K562 (cell line): ENCODE measurements at regions of chr18 and their contacts with region 1.

Region 1: DNA sequence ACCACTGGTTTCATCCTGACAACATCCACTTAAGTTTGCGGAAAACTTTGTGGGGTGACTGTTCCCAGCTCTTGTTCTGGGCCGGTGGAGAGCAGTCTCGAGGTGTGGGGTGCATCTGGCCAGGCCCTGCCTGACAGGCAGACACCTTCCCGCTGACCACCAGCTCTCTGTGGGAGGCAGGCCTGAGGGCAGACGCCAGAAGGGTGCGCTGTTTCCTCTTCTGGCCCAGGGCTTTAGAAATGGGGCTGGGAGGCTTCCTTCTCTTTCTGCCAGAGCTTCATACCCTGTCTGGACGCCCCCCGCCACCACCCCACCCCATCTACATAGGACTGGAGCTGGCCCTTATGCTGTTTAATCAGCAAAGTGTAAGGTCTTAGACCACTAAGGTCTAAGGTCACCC is 263.8 kb downstream of the LOXHD1 start:
- DNase-seq: peak; percentile 37 to 48 (median 40)
- ATAC-seq: peak; percentile 93
- H3K4me3 ChIP-seq: no peak overlapping the region
- H3K27ac ChIP-seq: no peak overlapping the region
- H3K4me1 ChIP-seq: no peaks in the 10 kb centered on the region; a peak in 4 of 5 replicates
- H3K27me3 ChIP-seq: peaks cover 0 to 16% of the 10 kb centered on the region in 2 experiments; a peak in 2 of 5 replicates
- CTCF ChIP-seq: peak; percentile 62 to 73 (median 69)
- EP300 ChIP-seq: no peak
- POLR2A ChIP-seq: no peak
- RAD21 ChIP-seq: peak; percentile 61 to 78

Region 2: GRCh38 chr18:46481048-46481846 is 88.0 kb after region 1 on chr18:
- CTCF ChIA-PET with region 1: no interaction called
- POLR2A ChIA-PET with region 1: no interaction called
- in situ Hi-C with region 1: no loop called
- intact Hi-C with region 1: loop called (anchors 5 kb)
- DNase-seq: peak; percentile 30 to 56 (median 38)
- ATAC-seq: peak; percentile 85
- H3K4me3 ChIP-seq: no peak overlapping the region
- H3K27ac ChIP-seq: no peak overlapping the region
- H3K4me1 ChIP-seq: no peaks in the 10 kb centered on the region
- H3K27me3 ChIP-seq: peaks cover 0 to 7% of the 10 kb centered on the region in 2 experiments; a peak in 2 of 5 replicates
- CTCF ChIP-seq: peak; percentile 66 to 68 (median 67)
- EP300 ChIP-seq: no peak
- POLR2A ChIP-seq: no peak
- RAD21 ChIP-seq: peak; percentile 40 to 75